Naive thymus-derived CD4-positive, alpha-beta T cell (primary cell): ENCODE measurements at regions of chr19 and their contacts with region 1.

Region 1: DNA sequence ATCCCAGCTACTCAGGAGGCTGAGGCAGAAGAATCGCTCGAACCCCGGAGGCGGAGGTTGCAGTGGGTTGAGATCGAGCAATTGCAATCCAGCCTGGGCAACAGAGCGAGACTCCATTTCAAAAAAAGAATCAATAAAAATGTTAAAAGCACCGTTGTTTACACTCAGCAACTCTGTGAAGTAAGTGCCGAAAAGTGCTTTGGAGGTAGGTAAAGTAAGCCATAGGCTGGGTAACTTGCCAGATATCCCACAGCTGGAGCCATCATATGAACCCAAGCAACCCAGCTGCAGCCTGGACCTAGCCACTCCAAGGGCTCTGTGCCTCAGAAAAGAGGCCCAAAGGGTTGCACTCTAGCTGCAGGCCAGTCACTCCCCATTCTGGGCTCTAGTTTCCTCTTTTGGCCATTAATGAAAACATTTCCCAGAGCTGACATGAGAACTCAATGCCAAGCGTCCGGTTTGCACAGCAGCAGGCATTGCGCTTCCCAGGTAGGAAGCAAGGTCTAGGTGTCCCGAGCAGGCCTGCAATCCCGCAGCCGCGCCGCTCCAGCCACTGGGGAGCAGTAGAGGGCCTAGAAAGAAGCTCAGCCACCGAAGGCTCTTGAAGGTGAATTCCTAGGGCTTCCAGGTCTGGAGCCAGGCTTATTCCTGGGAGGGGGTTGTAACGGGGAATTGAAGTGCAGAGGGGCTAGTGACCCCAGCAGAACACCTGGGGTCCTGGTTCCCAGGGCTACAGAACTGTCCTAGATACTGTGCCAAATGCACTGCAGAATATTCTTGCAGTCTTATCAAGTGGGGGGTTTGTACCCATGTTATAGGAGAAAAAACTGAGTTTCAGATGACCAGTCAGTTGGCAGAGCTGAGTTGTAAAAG is 4.1 kb upstream of the CD79A start:
- DNase-seq: peak; percentile 58 to 72 (median 65)
- ATAC-seq: peak; percentile 20
- H3K4me3 ChIP-seq: no peak overlapping the region
- H3K4me3 Mint-ChIP-seq: peak overlapping the region; percentile 1 to 93 (median 67)
- H3K27ac ChIP-seq: peak overlapping the region; percentile 74
- H3K27ac Mint-ChIP-seq: peak overlapping the region; percentile 91 to 99 (median 99)
- H3K4me1 ChIP-seq: peaks cover 82 to 91% of the 10 kb centered on the region in 2 donors
- H3K4me1 Mint-ChIP-seq: peaks cover 45 to 93% (median 79%) of the 10 kb centered on the region in 7 donors
- H3K27me3 ChIP-seq: no peaks in the 10 kb centered on the region
- H3K27me3 Mint-ChIP-seq: no peaks in the 10 kb centered on the region

Region 2: DNA sequence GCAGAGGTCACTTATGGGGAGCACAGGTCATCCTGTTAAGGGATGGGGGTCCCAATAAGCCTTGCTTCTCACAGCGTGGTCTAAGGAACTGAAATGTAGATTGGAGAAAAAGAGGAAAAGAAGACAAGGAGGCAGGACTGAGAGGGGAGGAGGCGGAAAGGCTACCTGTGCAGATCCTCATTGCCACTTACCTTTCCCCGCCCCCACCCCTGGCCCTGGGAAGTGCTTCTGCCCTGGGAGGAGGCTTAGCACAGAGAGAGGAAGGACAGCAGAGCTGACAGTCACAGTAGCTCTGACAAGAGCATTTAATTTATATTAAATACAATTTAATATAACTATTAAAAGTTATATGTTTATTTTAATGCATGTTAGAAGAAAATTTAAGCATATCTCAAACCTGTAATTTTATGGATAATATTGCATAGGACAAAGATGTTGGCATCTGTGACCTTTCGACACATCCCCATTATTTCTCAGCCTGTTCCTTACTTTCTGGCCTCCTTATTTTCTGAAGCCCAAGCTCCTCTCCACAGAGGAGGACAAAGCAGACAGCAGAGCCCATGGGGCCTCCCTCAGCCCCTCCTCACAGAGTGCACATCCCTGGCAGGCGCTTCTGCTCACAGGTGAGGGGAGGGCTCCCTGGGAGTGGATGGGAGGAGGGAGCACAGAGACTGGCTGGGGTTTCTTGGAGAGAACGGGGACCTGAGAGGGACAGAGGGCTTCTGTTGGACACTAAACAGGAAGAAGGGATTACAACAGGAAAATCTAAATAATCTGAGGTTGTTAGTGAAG is 273.6 kb before region 1 on chr19:
- CTCF ChIA-PET with region 1: no interaction called
- POLR2A ChIA-PET with region 1: no interaction called
- intact Hi-C with region 1: no loop called
- DNase-seq: no peak
- ATAC-seq: no peak
- H3K4me3 ChIP-seq: no peak overlapping the region
- H3K4me3 Mint-ChIP-seq: no peak overlapping the region
- H3K27ac ChIP-seq: no peak overlapping the region
- H3K27ac Mint-ChIP-seq: no peak overlapping the region
- H3K4me1 ChIP-seq: no peaks in the 10 kb centered on the region
- H3K4me1 Mint-ChIP-seq: peaks cover 9 to 17% (median 12%) of the 10 kb centered on the region in 7 donors
- H3K27me3 ChIP-seq: no peaks in the 10 kb centered on the region
- H3K27me3 Mint-ChIP-seq: peaks cover 0 to 40% (median 5%) of the 10 kb centered on the region in 5 donors

Region 3: GRCh38 chr19:41821003-41821735 is 51.8 kb before region 1 on chr19:
- CTCF ChIA-PET with region 1: no interaction called
- POLR2A ChIA-PET with region 1: no interaction called
- intact Hi-C with region 1: no loop called
- DNase-seq: peak in 8 of 9 donors; percentile 41 to 68 (median 59)
- ATAC-seq: peak; percentile 91
- H3K4me3 ChIP-seq: no peak overlapping the region
- H3K4me3 Mint-ChIP-seq: no peak overlapping the region
- H3K27ac ChIP-seq: no peak overlapping the region
- H3K27ac Mint-ChIP-seq: no peak overlapping the region
- H3K4me1 ChIP-seq: no peaks in the 10 kb centered on the region
- H3K4me1 Mint-ChIP-seq: peaks cover 0 to 6% (median 0%) of the 10 kb centered on the region in 7 donors
- H3K27me3 ChIP-seq: no peaks in the 10 kb centered on the region
- H3K27me3 Mint-ChIP-seq: peaks cover 8 to 46% (median 17%) of the 10 kb centered on the region in 5 donors

Region 4: DNA sequence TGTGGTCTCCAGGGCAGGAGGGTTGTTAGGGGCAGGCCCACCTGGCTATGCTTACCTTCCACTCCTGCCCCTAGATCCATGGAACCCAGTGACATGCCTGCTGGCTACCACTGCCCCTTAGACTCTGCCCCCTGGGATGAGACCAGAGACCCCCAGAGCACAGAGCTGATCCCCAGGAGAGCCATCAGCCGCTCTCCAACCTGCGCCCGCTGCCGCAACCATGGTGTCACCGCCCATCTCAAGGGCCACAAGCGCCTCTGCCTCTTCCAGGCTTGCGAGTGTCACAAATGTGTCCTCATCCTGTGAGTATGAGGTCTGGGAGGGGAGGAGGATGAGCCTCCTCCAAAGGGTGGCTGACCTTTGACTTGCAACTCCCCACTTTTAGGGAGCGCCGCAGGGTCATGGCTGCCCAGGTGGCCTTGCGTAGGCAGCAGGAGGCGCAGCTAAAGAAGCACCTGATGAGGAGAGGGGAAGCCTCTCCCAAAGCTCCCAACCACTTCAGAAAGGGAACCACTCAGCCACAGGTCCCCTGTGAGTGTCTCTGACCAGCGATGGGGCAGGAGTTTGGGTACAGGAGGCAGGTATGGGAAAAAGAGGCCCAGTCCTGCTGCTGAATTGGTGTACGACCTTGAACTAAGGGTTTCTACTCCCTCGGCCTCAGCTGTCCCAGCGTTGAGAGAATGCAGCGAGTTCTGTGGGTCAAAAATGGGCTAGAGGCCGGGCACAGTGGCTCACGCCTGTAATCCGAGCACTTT is 25.5 kb before region 1 on chr19:
- CTCF ChIA-PET with region 1: no interaction called
- POLR2A ChIA-PET with region 1: no interaction called
- intact Hi-C with region 1: no loop called
- DNase-seq: no peak
- ATAC-seq: no peak
- H3K4me3 ChIP-seq: no peak overlapping the region
- H3K4me3 Mint-ChIP-seq: no peak overlapping the region
- H3K27ac ChIP-seq: no peak overlapping the region
- H3K27ac Mint-ChIP-seq: no peak overlapping the region
- H3K4me1 ChIP-seq: no peaks in the 10 kb centered on the region
- H3K4me1 Mint-ChIP-seq: peaks cover 0 to 5% (median 0%) of the 10 kb centered on the region in 7 donors
- H3K27me3 ChIP-seq: no peaks in the 10 kb centered on the region
- H3K27me3 Mint-ChIP-seq: peaks cover 0 to 25% (median 4%) of the 10 kb centered on the region in 5 donors

Region 5: GRCh38 chr19:41897820-41898219 is 24.8 kb after region 1 on chr19:
- CTCF ChIA-PET with region 1: interaction called, 7 read pairs
- POLR2A ChIA-PET with region 1: interaction called, 565 read pairs
- intact Hi-C with region 1: no loop called
- DNase-seq: no peak
- ATAC-seq: no peak
- H3K4me3 ChIP-seq: no peak overlapping the region
- H3K4me3 Mint-ChIP-seq: peak overlapping the region in 4 of 10 donors; percentile 16 to 58 (median 34)
- H3K27ac ChIP-seq: peak overlapping the region; percentile 40
- H3K27ac Mint-ChIP-seq: peak overlapping the region in 8 of 9 donors; percentile 34 to 93 (median 82)
- H3K4me1 ChIP-seq: peaks cover 22 to 60% of the 10 kb centered on the region in 2 donors
- H3K4me1 Mint-ChIP-seq: peaks cover 30 to 76% (median 49%) of the 10 kb centered on the region in 7 donors
- H3K27me3 ChIP-seq: no peaks in the 10 kb centered on the region
- H3K27me3 Mint-ChIP-seq: no peaks in the 10 kb centered on the region

Region 6: DNA sequence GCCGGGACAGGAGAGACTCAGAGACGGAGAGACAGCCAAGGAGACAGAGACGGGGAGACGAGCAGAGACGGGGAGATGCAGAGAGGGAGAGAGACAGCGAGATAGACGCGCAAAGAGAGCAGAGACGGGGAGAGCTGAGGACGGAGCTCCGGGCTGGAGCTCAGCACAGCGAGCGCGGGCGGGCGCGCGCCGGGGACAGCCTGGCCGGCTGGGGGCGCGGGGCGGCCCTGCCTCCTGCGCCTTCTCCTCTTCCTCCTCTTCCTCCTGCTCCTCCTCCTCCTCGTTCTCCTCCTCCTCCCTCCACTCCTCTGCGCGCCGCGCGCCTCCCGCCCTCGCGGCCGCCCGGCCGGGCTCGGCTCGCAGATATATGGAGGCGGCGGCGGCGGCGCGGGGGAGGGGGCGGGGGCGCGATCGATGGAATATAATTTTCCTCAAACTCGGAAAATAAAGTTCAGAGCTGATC is 55.2 kb after region 1 on chr19 and contains the start of gene ERFL:
- CTCF ChIA-PET with region 1: interaction called, 11 read pairs
- POLR2A ChIA-PET with region 1: interaction called, 43 read pairs
- intact Hi-C with region 1: loop called in 1 of 2 experiments (anchors 1 kb)
- DNase-seq: peak in 2 of 9 donors; percentile 32 to 53
- ATAC-seq: peak; percentile 50
- H3K4me3 ChIP-seq: peak within 1 kb of the TSS; percentile 93
- H3K4me3 Mint-ChIP-seq: peak within 1 kb of the TSS in 6 of 10 donors; percentile 88 to 99 (median 91)
- H3K27ac ChIP-seq: peak within 1 kb of the TSS; percentile 70
- H3K27ac Mint-ChIP-seq: peak within 1 kb of the TSS; percentile 75 to 96 (median 90)
- H3K4me1 ChIP-seq: peaks cover 17 to 18% of the 10 kb centered on the region in 2 donors
- H3K4me1 Mint-ChIP-seq: peaks cover 23 to 41% (median 29%) of the 10 kb centered on the region in 7 donors
- H3K27me3 ChIP-seq: no peaks in the 10 kb centered on the region
- H3K27me3 Mint-ChIP-seq: peaks cover 0 to 9% (median 3%) of the 10 kb centered on the region in 5 donors
- total RNA-seq, gene ERFL: 3.0 to 15.0 (median 8.0) TPM

Region 7: DNA sequence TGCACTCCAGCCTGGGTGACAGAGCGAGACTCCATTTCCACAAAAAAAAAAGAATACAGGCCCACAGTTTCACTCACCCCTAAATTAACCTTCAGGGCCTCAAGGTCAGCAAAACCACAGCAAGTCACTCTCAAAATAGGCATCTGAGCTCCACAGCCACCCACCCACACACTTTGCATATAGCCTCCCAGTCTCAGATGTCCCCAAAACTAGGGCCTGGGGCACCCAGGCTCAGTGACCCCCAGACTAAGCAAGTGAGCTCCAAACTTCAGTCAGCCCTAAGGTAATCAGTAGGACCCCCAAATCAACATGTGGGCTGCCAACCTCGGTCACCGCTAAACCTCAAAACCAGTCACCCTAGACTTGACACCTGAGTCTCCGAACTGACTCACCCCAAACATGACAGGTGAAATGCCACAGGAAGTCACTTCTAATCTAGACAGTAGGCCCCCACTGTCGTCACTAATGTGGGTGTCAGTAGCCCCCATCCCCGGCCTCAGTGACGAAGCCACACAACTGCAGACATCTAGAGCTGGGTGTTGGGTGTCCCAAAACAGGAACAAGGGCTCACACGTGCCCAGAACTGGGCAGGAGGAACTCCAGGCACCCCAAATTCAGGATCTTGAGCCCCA is 72.2 kb after region 1 on chr19:
- CTCF ChIA-PET with region 1: interaction called, 41 read pairs
- POLR2A ChIA-PET with region 1: interaction called, 42 read pairs
- intact Hi-C with region 1: loop called in 1 of 2 experiments (anchors 2 kb)
- DNase-seq: peak; percentile 45 to 90 (median 82)
- ATAC-seq: peak; percentile 96
- H3K4me3 ChIP-seq: no peak overlapping the region
- H3K4me3 Mint-ChIP-seq: peak overlapping the region in 9 of 10 donors; percentile 39 to 77 (median 60)
- H3K27ac ChIP-seq: peak overlapping the region; percentile 57
- H3K27ac Mint-ChIP-seq: peak overlapping the region; percentile 84 to 100 (median 96)
- H3K4me1 ChIP-seq: peaks cover 23 to 41% of the 10 kb centered on the region in 2 donors
- H3K4me1 Mint-ChIP-seq: peaks cover 27 to 50% (median 41%) of the 10 kb centered on the region in 7 donors
- H3K27me3 ChIP-seq: no peaks in the 10 kb centered on the region
- H3K27me3 Mint-ChIP-seq: peaks cover 0 to 16% (median 4%) of the 10 kb centered on the region in 5 donors

Region 8: GRCh38 chr19:41959056-41960053 is 86.3 kb after region 1 on chr19 and contains the start of gene RABAC1:
- CTCF ChIA-PET with region 1: interaction called, 6 read pairs
- POLR2A ChIA-PET with region 1: interaction called, 14 read pairs
- intact Hi-C with region 1: loop called (anchors 2 kb)
- DNase-seq: peak; percentile 67 to 91 (median 86)
- ATAC-seq: peak; percentile 95
- H3K4me3 ChIP-seq: peak within 1 kb of the TSS; percentile 78
- H3K4me3 Mint-ChIP-seq: peak within 1 kb of the TSS; percentile 80 to 99 (median 91)
- H3K27ac ChIP-seq: peak within 1 kb of the TSS; percentile 81
- H3K27ac Mint-ChIP-seq: peak within 1 kb of the TSS; percentile 74 to 94 (median 90)
- H3K4me1 ChIP-seq: peaks cover 8 to 9% of the 10 kb centered on the region in 2 donors
- H3K4me1 Mint-ChIP-seq: peaks cover 17 to 22% (median 18%) of the 10 kb centered on the region in 7 donors
- H3K27me3 ChIP-seq: no peaks in the 10 kb centered on the region
- H3K27me3 Mint-ChIP-seq: no peaks in the 10 kb centered on the region
- total RNA-seq, gene RABAC1: 70.4 to 90.9 (median 78.1) TPM

Region 9: DNA sequence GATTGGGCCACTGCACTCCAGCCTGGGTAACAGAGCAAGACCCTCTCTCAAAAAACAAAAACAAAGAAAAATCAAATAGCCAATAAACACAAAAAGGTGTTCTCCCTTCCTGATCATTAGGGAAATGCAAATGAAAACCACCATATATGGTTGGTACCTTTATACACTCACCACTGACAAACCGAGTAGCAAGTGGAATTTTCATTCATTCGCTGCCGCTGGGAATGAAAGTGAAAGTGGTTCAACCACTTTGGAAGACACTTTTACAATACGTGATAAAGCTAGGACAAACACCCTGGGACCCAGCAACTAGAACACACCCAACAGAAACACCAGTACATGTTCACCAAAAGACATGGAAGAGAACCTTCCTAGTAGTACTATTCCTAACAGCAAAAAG is 176.0 kb after region 1 on chr19:
- CTCF ChIA-PET with region 1: no interaction called
- POLR2A ChIA-PET with region 1: no interaction called
- intact Hi-C with region 1: no loop called
- DNase-seq: no peak
- ATAC-seq: no peak
- H3K4me3 ChIP-seq: peak overlapping the region; percentile 4
- H3K4me3 Mint-ChIP-seq: peak overlapping the region; percentile 14 to 84 (median 73)
- H3K27ac ChIP-seq: no peak overlapping the region
- H3K27ac Mint-ChIP-seq: peak overlapping the region in 6 of 9 donors; percentile 5 to 74 (median 42)
- H3K4me1 ChIP-seq: peaks cover 0 to 5% of the 10 kb centered on the region in 2 donors
- H3K4me1 Mint-ChIP-seq: peaks cover 5 to 8% (median 7%) of the 10 kb centered on the region in 7 donors
- H3K27me3 ChIP-seq: no peaks in the 10 kb centered on the region
- H3K27me3 Mint-ChIP-seq: peaks cover 0 to 5% (median under 1%) of the 10 kb centered on the region in 5 donors